Mammary epithelial cell (primary cell): ENCODE measurements at regions of chr16 and their contacts with region 1.

Region 1: DNA sequence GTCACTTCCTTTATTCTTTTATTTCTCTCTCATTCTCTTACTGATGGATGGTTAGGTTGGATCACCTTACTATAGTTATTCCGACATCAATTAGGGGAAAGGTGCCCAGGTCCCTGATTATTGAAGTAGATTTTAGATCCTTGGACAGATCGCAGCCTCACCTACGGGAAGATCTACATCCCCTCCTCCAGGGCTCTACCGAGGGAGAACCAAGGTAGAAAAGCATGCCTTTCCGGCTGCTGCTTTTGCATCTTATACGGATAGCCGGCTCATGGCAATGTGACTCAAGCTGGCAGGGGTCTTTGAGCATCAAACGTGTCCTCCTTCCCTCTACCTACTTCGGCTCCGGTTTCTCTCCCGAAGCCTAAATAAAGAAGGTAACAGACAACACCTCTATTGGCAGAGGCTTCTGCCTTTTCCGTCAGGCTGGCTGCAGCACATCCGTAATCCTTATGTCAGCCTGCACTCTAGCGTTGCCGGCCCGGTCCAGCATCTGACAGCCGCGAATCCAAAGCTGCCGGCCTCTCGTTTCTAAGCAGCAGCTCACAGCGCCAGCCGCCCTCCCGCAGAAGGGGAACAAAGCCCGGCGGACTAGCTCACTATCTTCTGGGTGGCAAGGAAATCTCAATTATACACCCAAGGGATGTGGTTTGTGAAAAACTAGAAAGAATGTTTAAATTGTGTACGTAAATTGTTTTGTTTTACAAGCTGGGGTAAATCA is 46.9 kb downstream of the IRX6 start:
- DNase-seq: peak; percentile 42
- H3K4me3 ChIP-seq: no peak overlapping the region
- H3K27ac ChIP-seq: no peak overlapping the region
- H3K4me1 ChIP-seq: peaks cover 17% of the 10 kb centered on the region
- H3K27me3 ChIP-seq: no peaks in the 10 kb centered on the region
- CTCF ChIP-seq: peak; percentile 42 to 71

Region 2: GRCh38 chr16:53549970-53550690 is 1820.8 kb before region 1 on chr16:
- CTCF ChIA-PET with region 1: interaction called, 5 read pairs
- dilution Hi-C with region 1: no loop called
- in situ Hi-C with region 1: loop called in 1 of 2 experiments (anchors 25 kb)
- intact Hi-C with region 1: loop called (anchors 2 kb)
- DNase-seq: peak; percentile 60
- H3K4me3 ChIP-seq: no peak overlapping the region
- H3K27ac ChIP-seq: no peak overlapping the region
- H3K4me1 ChIP-seq: no peaks in the 10 kb centered on the region
- H3K27me3 ChIP-seq: no peaks in the 10 kb centered on the region
- CTCF ChIP-seq: peak; percentile 72 to 76

Region 3: DNA sequence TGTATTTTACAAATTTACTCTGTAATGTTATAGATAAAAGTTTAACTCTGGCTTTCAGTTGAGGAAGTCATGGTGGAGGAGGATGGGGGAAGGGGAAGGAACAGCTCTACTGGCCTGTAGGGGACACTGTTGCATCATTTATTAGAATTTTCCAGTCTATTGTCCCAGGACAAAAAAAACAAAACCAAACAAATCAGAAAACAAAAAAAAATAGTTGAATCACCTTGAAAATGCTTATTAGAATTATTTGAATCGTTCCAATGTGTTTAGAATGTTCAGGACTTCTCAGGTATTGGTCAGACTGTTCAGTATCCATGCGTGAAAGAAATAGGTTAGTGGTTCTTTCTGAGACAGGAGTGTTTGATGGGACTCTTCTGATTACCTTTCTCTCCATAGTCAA is 1424.9 kb before region 1 on chr16:
- CTCF ChIA-PET with region 1: no interaction called
- dilution Hi-C with region 1: no loop called
- in situ Hi-C with region 1: no loop called
- intact Hi-C with region 1: loop called (anchors 5 kb)
- DNase-seq: peak; percentile 43
- H3K4me3 ChIP-seq: no peak overlapping the region
- H3K27ac ChIP-seq: no peak overlapping the region
- H3K4me1 ChIP-seq: peaks cover 3% of the 10 kb centered on the region
- H3K27me3 ChIP-seq: no peaks in the 10 kb centered on the region
- CTCF ChIP-seq: peak; percentile 83 to 94

Region 4: GRCh38 chr16:54817446-54817845 is 553.5 kb before region 1 on chr16:
- CTCF ChIA-PET with region 1: no interaction called
- dilution Hi-C with region 1: no loop called
- in situ Hi-C with region 1: no loop called
- intact Hi-C with region 1: loop called (anchors 5 kb)
- DNase-seq: peak; percentile 59
- H3K4me3 ChIP-seq: no peak overlapping the region
- H3K27ac ChIP-seq: no peak overlapping the region
- H3K4me1 ChIP-seq: peaks cover 2% of the 10 kb centered on the region
- H3K27me3 ChIP-seq: no peaks in the 10 kb centered on the region
- CTCF ChIP-seq: peak; percentile 56 to 83

Region 5: DNA sequence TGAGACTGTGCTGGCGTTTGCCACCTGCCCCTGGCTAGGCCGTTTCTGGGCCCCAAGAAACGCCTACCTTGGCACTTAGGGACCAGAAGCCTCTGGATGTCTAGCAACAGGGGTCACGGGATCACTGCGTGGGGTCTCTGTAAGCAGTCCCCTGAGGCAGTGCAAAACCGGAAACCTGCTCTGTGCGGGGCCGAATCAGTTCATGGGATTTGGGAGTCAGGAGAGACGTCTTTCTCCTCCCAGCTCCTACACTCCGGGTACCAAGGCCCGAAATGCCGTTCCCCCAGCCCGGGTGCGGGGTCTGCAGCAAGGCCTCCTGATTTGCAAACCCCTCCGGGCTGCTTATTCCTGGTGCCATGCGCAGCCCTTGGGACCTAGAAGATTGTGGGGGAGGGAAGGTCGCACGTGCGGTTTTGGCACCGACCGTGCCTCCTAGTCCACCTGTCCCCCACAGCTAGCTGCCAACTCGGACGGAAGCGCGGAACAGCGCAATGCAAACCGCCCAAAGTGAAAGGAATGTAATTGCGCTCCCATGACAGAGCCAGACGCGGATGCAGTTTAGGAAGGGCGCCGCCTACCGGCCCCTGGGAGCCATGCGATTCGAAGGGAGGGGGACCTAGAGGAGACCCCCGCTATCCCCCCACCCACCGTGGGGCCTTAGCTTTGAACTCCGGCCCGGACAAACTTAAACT is 433.8 kb before region 1 on chr16:
- CTCF ChIA-PET with region 1: no interaction called
- dilution Hi-C with region 1: no loop called
- in situ Hi-C with region 1: no loop called
- intact Hi-C with region 1: loop called (anchors 1 kb)
- DNase-seq: peak; percentile 82
- H3K4me3 ChIP-seq: peak overlapping the region; percentile 64 to 95 (median 72)
- H3K27ac ChIP-seq: peak overlapping the region; percentile 90
- H3K4me1 ChIP-seq: peaks cover 29% of the 10 kb centered on the region
- H3K27me3 ChIP-seq: no peaks in the 10 kb centered on the region
- CTCF ChIP-seq: peak; percentile 79 to 88

Region 6: GRCh38 chr16:55035029-55035428 is 335.9 kb before region 1 on chr16:
- CTCF ChIA-PET with region 1: interaction called, 6 read pairs
- dilution Hi-C with region 1: no loop called
- in situ Hi-C with region 1: no loop called
- intact Hi-C with region 1: loop called (anchors 5 kb)
- DNase-seq: peak; percentile 25
- H3K4me3 ChIP-seq: no peak overlapping the region
- H3K27ac ChIP-seq: no peak overlapping the region
- H3K4me1 ChIP-seq: peaks cover 12% of the 10 kb centered on the region
- H3K27me3 ChIP-seq: peaks cover 4% of the 10 kb centered on the region
- CTCF ChIP-seq: peak; percentile 47 to 63

Region 7: DNA sequence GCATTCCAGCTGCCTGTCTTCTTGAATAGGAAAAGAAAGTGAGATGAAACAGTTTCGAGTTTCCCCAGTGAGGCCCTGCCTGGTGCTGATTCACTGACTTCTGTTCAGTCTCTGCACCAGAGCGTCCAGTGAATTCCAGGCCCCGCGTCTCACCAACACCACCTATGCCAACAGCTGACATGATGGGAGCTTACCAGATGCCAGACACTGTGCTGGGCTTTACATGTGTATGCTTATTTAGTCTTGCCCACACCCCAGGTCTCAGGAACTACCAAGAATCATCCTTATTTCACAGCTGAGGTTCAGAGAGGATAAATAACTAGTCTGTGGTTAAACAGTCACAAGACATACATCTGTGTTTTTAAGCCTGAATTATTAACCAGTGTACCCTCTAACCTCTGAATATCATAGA is 76.0 kb before region 1 on chr16:
- CTCF ChIA-PET with region 1: interaction called, 3 read pairs
- dilution Hi-C with region 1: no loop called
- in situ Hi-C with region 1: no loop called
- intact Hi-C with region 1: loop called (anchors 1 kb)
- DNase-seq: peak; percentile 59
- H3K4me3 ChIP-seq: no peak overlapping the region
- H3K27ac ChIP-seq: no peak overlapping the region
- H3K4me1 ChIP-seq: peaks cover 16% of the 10 kb centered on the region
- H3K27me3 ChIP-seq: no peaks in the 10 kb centered on the region
- CTCF ChIP-seq: no peak

Region 8: DNA sequence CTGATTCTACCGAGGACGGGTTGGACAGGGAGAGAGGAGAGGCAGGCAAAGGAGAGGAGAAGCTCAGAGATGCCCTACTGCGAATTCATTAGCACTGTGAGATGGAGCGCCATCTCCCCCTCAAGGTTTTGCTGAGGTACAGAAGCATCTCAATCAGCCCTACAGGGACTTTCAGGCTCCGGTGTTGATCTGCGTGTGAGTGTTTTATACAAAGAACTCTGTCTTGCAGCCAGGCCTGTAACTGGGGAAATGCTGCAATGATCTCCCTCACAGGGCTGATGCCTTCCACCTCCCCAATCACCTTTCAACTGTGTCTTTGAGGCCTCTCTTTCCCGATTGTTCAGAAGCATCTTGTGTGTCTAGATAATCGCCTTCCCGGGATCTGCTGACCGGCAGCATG is 27.8 kb after region 1 on chr16:
- CTCF ChIA-PET with region 1: no interaction called
- dilution Hi-C with region 1: no loop called
- in situ Hi-C with region 1: no loop called
- intact Hi-C with region 1: no loop called
- DNase-seq: no peak
- H3K4me3 ChIP-seq: no peak overlapping the region
- H3K27ac ChIP-seq: no peak overlapping the region
- H3K4me1 ChIP-seq: peaks cover 10% of the 10 kb centered on the region
- H3K27me3 ChIP-seq: no peaks in the 10 kb centered on the region
- CTCF ChIP-seq: no peak